Sciatic nerve (tissue), 2 donors: ENCODE measurements at regions of chr20 and their contacts with region 1.

Region 1: DNA sequence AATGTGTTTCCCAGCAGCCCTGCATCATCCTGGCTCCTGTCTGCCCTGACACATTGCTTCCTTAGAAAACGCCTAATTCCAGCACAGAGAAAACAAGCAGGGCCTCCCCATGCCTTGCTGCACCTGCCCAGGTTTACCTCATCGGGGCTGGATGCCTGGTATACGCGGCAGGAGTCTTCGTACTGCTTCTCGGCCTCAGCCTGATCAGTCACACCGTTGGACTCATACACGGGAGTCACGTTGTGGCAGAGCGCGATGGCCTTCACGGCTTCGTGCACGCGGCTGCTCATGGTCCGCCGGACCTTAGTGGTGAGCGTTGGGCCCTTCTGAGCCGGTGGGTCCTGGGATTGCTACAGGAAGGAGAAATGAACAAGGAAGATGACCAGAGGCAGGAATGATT is 111.4 kb downstream of the ATP9A start:
- DNase-seq: no peak
- ATAC-seq: no peak

Region 2: GRCh38 chr20:51135926-51136715 is 520.7 kb before region 1 on chr20:
- intact Hi-C with region 1: no loop called
- DNase-seq: no peak
- ATAC-seq: no peak

Region 3: GRCh38 chr20:51703400-51704287 is 46.8 kb after region 1 on chr20:
- intact Hi-C with region 1: no loop called
- DNase-seq: no peak
- ATAC-seq: no peak

Region 4: GRCh38 chr20:52655395-52655794 is 998.6 kb after region 1 on chr20:
- intact Hi-C with region 1: loop called (anchors 5 kb)
- DNase-seq: no peak
- ATAC-seq: no peak